Motor neuron (in vitro differentiated cells): ENCODE measurements at regions of chr16 and their contacts with region 1.

Region 1: DNA sequence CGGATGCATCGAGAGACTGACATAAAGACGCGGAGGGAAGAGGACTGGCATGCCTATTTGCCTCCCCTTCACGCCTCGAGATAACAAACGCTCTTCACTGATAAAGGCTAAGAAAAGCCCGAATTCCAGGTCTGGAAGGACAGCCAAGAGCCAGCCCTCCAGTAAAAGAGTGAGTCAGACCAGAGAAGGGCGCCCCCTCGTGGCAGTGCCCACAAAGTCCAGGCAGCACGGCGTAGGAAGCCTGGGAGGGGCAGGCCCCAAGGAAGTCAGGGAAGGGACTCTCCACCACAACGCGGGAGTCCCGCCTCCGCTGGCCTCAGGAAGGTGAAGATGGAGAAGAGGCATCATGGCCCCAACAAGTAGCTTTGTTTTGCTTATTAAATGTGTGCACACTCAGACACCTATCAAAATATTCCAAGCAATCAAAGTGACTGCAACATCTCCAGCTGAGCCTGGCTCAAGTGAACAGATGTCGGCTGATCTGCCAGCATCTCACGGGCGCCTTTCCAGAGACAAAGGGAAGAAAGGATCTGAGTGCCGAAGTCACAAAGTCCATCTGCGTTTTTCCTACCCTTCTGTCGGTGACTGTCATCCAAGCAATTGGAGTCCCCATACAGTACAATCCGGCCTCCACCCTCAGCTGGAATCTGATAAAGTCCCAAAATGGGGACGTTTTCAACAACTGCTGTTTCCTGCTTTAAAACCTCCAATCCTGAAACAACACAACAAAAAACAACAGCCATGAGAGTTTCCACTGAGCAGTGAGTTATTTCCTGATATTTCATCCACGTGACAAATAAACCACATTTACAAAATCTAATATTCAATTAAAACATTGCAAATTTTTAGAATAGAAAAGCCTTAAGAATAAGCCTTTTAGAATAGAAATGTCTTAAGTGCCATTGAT is 20.4 kb upstream of the SLC38A8 start:
- ATAC-seq: peak; percentile 94 to 99 (median 97)
- H3K4me3 ChIP-seq: no peak overlapping the region
- H3K27ac ChIP-seq: no peak overlapping the region
- H3K4me1 ChIP-seq: peaks cover 0 to 3% of the 10 kb centered on the region in 2 donors

Region 2: DNA sequence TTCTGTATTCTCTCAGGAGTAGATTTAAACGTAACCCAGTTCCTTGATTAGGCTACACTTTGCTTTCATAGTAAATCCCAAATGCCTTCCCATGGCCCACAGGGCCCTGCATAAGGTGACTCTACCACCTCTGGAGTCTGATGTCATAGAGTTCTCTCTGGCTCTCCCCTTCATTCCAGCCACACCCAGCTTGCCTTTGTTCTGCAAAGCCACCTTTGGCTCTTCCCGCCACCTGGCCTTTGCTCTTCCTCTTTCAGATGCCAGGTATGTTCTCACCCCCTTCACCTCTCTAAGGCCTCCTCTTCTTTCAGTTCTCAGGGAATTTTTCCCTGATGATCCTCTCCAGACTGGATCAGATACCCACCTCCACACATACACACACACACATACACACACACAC is 396.5 kb before region 1 on chr16:
- in situ Hi-C with region 1: no loop called
- ATAC-seq: no peak
- H3K4me3 ChIP-seq: no peak overlapping the region
- H3K27ac ChIP-seq: no peak overlapping the region
- H3K4me1 ChIP-seq: no peaks in the 10 kb centered on the region

Region 3: DNA sequence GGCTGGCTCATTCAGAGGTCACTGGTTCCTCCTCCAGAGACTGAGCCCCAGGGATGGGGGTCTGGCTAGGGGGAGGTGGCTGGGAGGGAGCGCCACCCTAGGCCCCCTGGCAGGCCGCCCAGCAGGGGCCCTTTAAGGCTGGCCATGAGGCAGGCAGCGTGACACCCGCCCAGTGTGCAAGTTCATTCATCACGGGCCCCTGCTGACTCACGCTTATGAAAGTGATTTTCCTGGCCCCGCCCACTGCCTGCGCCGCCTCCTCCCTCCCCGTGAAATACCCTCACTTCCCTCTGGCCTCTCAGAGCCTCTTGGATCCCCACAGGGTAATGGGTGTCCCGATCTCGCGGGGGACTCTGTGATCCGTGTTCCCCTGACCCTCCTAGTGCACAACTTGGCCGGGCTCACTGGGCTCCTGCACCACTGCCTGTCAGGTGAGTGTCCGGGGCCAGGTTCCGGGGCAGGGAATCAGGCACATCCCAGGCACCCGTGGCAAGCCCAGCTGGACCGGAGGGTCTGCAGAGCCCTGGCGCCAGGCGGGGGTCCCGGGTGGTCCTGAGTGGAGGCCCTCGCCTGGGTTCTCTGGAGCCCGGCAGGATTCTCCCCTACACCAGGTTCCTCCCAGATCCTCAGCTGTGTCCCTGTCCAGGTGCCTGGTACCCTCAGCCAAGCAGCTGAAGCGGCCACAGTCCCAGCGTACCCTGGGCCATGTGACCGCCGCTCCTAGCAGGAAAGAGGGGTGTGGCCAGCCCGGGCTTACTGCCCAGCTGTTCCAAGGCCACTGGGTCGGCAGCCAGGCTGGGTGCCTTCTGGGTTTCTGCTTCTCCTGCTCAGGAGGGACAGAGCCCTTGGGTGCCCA is 109.8 kb before region 1 on chr16 and contains the start of gene OSGIN1:
- in situ Hi-C with region 1: loop called in 4 of 9 experiments (anchors 10 to 25 kb)
- ATAC-seq: peak; percentile 82 to 91 (median 88)
- H3K4me3 ChIP-seq: peak within 1 kb of the TSS in 4 of 5 donors; percentile 16 to 41 (median 30)
- H3K27ac ChIP-seq: peak within 1 kb of the TSS in 1 of 2 donors; percentile 20
- H3K4me1 ChIP-seq: peaks cover 13 to 20% of the 10 kb centered on the region in 2 donors
- total RNA-seq, gene OSGIN1: 0.92 to 14.8 (median 2.0) TPM

Region 4: GRCh38 chr16:83967806-83968305 is 95.1 kb before region 1 on chr16 and contains the start of gene NECAB2:
- in situ Hi-C with region 1: loop called in 8 of 9 experiments (anchors 10 to 25 kb)
- ATAC-seq: peak; percentile 67 to 84 (median 71)
- H3K4me3 ChIP-seq: peak within 1 kb of the TSS; percentile 38 to 57 (median 43)
- H3K27ac ChIP-seq: no peak within 1 kb of the TSS
- H3K4me1 ChIP-seq: peaks cover 3 to 22% of the 10 kb centered on the region in 2 donors
- total RNA-seq, gene NECAB2: 0.63 to 23.4 (median 2.6) TPM